Adrenal gland (tissue), 19 donors: ENCODE measurements at regions of chr1 and their contacts with region 1.

Region 1: GRCh38 chr1:35298464-35298863 is 30.0 kb downstream of the ZMYM4 start:
- DNase-seq: peak in 4 of 7 donors; percentile 14 to 31 (median 26)
- H3K4me3 ChIP-seq: no peak overlapping the region
- H3K27ac ChIP-seq: no peak overlapping the region
- H3K4me1 ChIP-seq: no peaks in the 10 kb centered on the region
- H3K27me3 ChIP-seq: no peaks in the 10 kb centered on the region
- CTCF ChIP-seq: peak in 5 of 6 experiments; percentile 6 to 51 (median 43)
- POLR2A ChIP-seq: no peak

Region 2: GRCh38 chr1:35202048-35202719 is 96.3 kb before region 1 on chr1:
- intact Hi-C with region 1: loop called (anchors 10 kb)
- DNase-seq: peak; percentile 67 to 90 (median 72)
- H3K4me3 ChIP-seq: no peak overlapping the region
- H3K27ac ChIP-seq: no peak overlapping the region
- H3K4me1 ChIP-seq: peaks cover 0 to 6% of the 10 kb centered on the region in 2 donors
- H3K27me3 ChIP-seq: no peaks in the 10 kb centered on the region
- CTCF ChIP-seq: peak; percentile 76 to 90 (median 86)
- POLR2A ChIP-seq: no peak